OCI-LY7 (cell line): ENCODE measurements at regions of chr11 and their contacts with region 1.

Region 1: GRCh38 chr11:112555491-112556364 is 295.1 kb upstream of the PLET1 start:
- DNase-seq: peak; percentile 36
- H3K4me3 ChIP-seq: no peak overlapping the region
- H3K27ac ChIP-seq: no peak overlapping the region
- H3K4me1 ChIP-seq: no peaks in the 10 kb centered on the region
- CTCF ChIP-seq: peak; percentile 84

Region 2: GRCh38 chr11:112219476-112220232 is 336.1 kb before region 1 on chr11:
- CTCF ChIA-PET with region 1: interaction called, 5 read pairs
- POLR2A ChIA-PET with region 1: no interaction called
- intact Hi-C with region 1: loop called (anchors 2 kb)
- DNase-seq: peak; percentile 79
- H3K4me3 ChIP-seq: no peak overlapping the region
- H3K27ac ChIP-seq: no peak overlapping the region
- H3K4me1 ChIP-seq: no peaks in the 10 kb centered on the region
- CTCF ChIP-seq: peak; percentile 88

Region 3: DNA sequence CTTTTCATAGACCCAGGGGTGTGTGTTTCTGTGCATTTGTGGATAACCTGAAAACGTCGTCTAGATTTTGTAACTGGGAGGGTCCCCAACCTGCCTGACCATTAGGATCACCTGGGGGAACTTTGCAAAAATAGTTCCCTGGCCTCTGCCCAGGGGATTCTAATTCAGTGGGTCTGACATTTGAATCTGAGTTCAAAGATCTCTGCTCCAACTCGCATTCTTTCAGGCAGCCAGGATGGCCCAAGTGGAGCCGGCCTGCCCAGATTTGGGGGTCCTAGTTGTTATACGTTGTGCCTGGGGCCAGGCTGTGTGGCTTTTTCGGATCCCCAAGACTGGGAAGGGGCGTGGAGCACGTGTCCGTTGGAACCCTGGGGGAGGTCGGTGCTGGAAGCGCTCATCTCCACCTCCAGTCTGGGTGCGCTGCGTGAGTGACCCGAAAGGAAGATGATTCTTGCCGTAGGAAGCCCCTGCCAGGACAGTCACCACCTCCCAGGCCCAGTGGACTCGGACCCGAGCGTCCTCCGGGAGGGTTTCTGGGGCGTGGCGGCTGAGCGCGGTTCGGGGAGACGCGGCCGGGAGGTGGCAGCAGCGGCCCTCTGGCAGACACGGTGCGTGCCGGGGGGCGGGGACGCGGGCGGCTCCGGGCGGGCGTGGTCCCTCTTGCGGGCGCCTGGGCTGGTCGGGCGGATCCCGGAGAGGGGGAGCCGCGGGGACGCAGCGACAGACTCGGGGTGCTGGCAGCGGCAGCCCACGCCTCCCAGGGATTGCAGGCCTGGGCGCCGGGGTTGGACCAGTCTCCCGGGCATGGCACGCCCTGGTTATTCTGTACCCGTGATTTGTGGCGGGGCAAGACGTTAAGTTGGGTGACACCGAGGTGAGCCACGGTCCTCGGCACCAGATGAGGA is 265.9 kb before region 1 on chr11:
- CTCF ChIA-PET with region 1: no interaction called
- POLR2A ChIA-PET with region 1: no interaction called
- intact Hi-C with region 1: loop called (anchors 1 kb)
- DNase-seq: peak; percentile 64
- H3K4me3 ChIP-seq: peak overlapping the region; percentile 49
- H3K27ac ChIP-seq: no peak overlapping the region
- H3K4me1 ChIP-seq: peaks cover 5% of the 10 kb centered on the region
- CTCF ChIP-seq: peak; percentile 83